ENCODE measurements at regions of chr3 and their contacts with region 1.

Region 1: DNA sequence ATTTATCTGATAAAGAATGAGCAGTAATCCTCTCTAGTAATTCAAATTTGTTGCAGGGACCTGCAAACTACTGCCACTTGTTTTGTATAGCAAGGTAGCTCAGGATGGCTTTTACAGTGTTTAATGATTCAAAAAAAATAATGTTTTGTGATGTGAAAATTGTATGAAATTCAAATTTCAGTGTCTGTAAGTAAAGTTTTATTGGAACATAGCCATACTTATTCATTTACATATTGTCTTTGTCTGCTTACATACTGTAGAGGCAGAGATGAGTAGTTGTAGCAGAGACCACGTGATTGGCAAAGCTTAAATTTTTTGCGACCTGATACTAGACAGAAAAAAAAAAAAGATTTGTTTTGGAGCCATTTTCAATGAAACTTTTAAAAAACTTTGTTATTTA is 6.5 kb upstream of the UTS2B start:
- DNase-seq: no peak
- ATAC-seq: peak; percentile 37
- H3K4me3 ChIP-seq: peak overlapping the region; percentile 54
- H3K27ac ChIP-seq: peak overlapping the region; percentile 15; the same call in 1 of the 2 replicates
- H3K4me1 ChIP-seq: peaks cover 12% of the 10 kb centered on the region; the same call in 1 of the 2 replicates
- H3K27me3 ChIP-seq: no peaks in the 10 kb centered on the region
- CTCF ChIP-seq: no peak
- EP300 ChIP-seq: no peak
- POLR2A ChIP-seq: no peak
- RAD21 ChIP-seq: no peak

Region 2: GRCh38 chr3:191263365-191263764 is 73.5 kb before region 1 on chr3:
- CTCF ChIA-PET with region 1: interaction called, 4 read pairs
- POLR2A ChIA-PET with region 1: interaction called, 3 read pairs
- RAD21 ChIA-PET with region 1: interaction called, 19 read pairs
- SMC1A ChIA-PET with region 1: interaction called, 39 read pairs
- in situ Hi-C with region 1: no loop called
- intact Hi-C with region 1: no loop called
- DNase-seq: no peak
- ATAC-seq: peak; percentile 98
- H3K4me3 ChIP-seq: peak overlapping the region; percentile 10; the same call in 1 of the 2 replicates
- H3K27ac ChIP-seq: peak overlapping the region; percentile 40
- H3K4me1 ChIP-seq: peaks cover 8% of the 10 kb centered on the region; the same call in 1 of the 2 replicates
- H3K27me3 ChIP-seq: no peaks in the 10 kb centered on the region
- CTCF ChIP-seq: no peak
- EP300 ChIP-seq: no peak
- POLR2A ChIP-seq: no peak
- RAD21 ChIP-seq: no peak

Region 3: GRCh38 chr3:191296041-191296541 is 40.7 kb before region 1 on chr3:
- CTCF ChIA-PET with region 1: interaction called, 4 read pairs
- POLR2A ChIA-PET with region 1: interaction called, 5 read pairs
- RAD21 ChIA-PET with region 1: interaction called, 12 read pairs
- SMC1A ChIA-PET with region 1: interaction called, 30 read pairs
- in situ Hi-C with region 1: no loop called
- intact Hi-C with region 1: no loop called
- DNase-seq: peak; percentile 88
- ATAC-seq: peak; percentile 80
- H3K4me3 ChIP-seq: no peak overlapping the region
- H3K27ac ChIP-seq: peak overlapping the region; percentile 5; the same call in 1 of the 2 replicates
- H3K4me1 ChIP-seq: peaks cover 46% of the 10 kb centered on the region
- H3K27me3 ChIP-seq: no peaks in the 10 kb centered on the region
- CTCF ChIP-seq: no peak
- EP300 ChIP-seq: peak; percentile 88 to 98
- POLR2A ChIP-seq: no peak
- RAD21 ChIP-seq: no peak

Region 4: GRCh38 chr3:191350396-191351090 is 13.7 kb after region 1 on chr3:
- CTCF ChIA-PET with region 1: interaction called, 25 read pairs
- POLR2A ChIA-PET with region 1: interaction called, 49 read pairs
- RAD21 ChIA-PET with region 1: interaction called, 108 read pairs
- SMC1A ChIA-PET with region 1: interaction called, 208 read pairs
- in situ Hi-C with region 1: no loop called
- intact Hi-C with region 1: loop called (anchors 2 kb)
- DNase-seq: no peak
- ATAC-seq: no peak
- H3K4me3 ChIP-seq: no peak overlapping the region
- H3K27ac ChIP-seq: no peak overlapping the region
- H3K4me1 ChIP-seq: peaks cover 9% of the 10 kb centered on the region; the same call in 1 of the 2 replicates
- H3K27me3 ChIP-seq: no peaks in the 10 kb centered on the region
- CTCF ChIP-seq: no peak
- EP300 ChIP-seq: no peak
- POLR2A ChIP-seq: no peak
- RAD21 ChIP-seq: no peak

Region 5: GRCh38 chr3:191376516-191377141 is 39.8 kb after region 1 on chr3:
- CTCF ChIA-PET with region 1: interaction called, 4 read pairs
- POLR2A ChIA-PET with region 1: interaction called, 3 read pairs
- RAD21 ChIA-PET with region 1: interaction called, 16 read pairs
- SMC1A ChIA-PET with region 1: interaction called, 7 read pairs
- in situ Hi-C with region 1: no loop called
- intact Hi-C with region 1: no loop called
- DNase-seq: no peak
- ATAC-seq: no peak
- H3K4me3 ChIP-seq: no peak overlapping the region
- H3K27ac ChIP-seq: no peak overlapping the region
- H3K4me1 ChIP-seq: peaks cover 14% of the 10 kb centered on the region
- H3K27me3 ChIP-seq: no peaks in the 10 kb centered on the region
- CTCF ChIP-seq: no peak
- EP300 ChIP-seq: no peak
- POLR2A ChIP-seq: no peak
- RAD21 ChIP-seq: no peak

Region 6: GRCh38 chr3:191383124-191383523 is 46.3 kb after region 1 on chr3:
- CTCF ChIA-PET with region 1: interaction called, 4 read pairs
- POLR2A ChIA-PET with region 1: interaction called, 3 read pairs
- RAD21 ChIA-PET with region 1: interaction called, 17 read pairs
- SMC1A ChIA-PET with region 1: interaction called, 12 read pairs
- in situ Hi-C with region 1: no loop called
- intact Hi-C with region 1: no loop called
- DNase-seq: no peak
- ATAC-seq: no peak
- H3K4me3 ChIP-seq: no peak overlapping the region
- H3K27ac ChIP-seq: no peak overlapping the region
- H3K4me1 ChIP-seq: peaks cover 12% of the 10 kb centered on the region
- H3K27me3 ChIP-seq: no peaks in the 10 kb centered on the region
- CTCF ChIP-seq: no peak
- EP300 ChIP-seq: no peak
- POLR2A ChIP-seq: no peak
- RAD21 ChIP-seq: no peak

Region 7: GRCh38 chr3:191455257-191455952 is 118.6 kb after region 1 on chr3:
- CTCF ChIA-PET with region 1: no interaction called
- POLR2A ChIA-PET with region 1: no interaction called
- RAD21 ChIA-PET with region 1: no interaction called
- SMC1A ChIA-PET with region 1: no interaction called
- in situ Hi-C with region 1: no loop called
- intact Hi-C with region 1: no loop called
- DNase-seq: peak; percentile 5
- ATAC-seq: peak; percentile 84
- H3K4me3 ChIP-seq: 0 out of 2 replicates have a peak overlapping the region, but pooled peaks have one; percentile 19
- H3K27ac ChIP-seq: no peak overlapping the region
- H3K4me1 ChIP-seq: no peaks in the 10 kb centered on the region
- H3K27me3 ChIP-seq: no peaks in the 10 kb centered on the region
- CTCF ChIP-seq: no peak
- EP300 ChIP-seq: no peak
- POLR2A ChIP-seq: no peak
- RAD21 ChIP-seq: no peak

Region 8: GRCh38 chr3:191549357-191549756 is 212.5 kb after region 1 on chr3:
- CTCF ChIA-PET with region 1: no interaction called
- POLR2A ChIA-PET with region 1: no interaction called
- RAD21 ChIA-PET with region 1: no interaction called
- SMC1A ChIA-PET with region 1: no interaction called
- in situ Hi-C with region 1: no loop called
- intact Hi-C with region 1: no loop called
- DNase-seq: no peak
- ATAC-seq: peak; percentile 61
- H3K4me3 ChIP-seq: no peak overlapping the region
- H3K27ac ChIP-seq: no peak overlapping the region
- H3K4me1 ChIP-seq: no peaks in the 10 kb centered on the region
- H3K27me3 ChIP-seq: no peaks in the 10 kb centered on the region
- CTCF ChIP-seq: no peak
- EP300 ChIP-seq: no peak
- POLR2A ChIP-seq: no peak
- RAD21 ChIP-seq: no peak

Measured in GM12878 (cell line).